ENCODE measurements at regions of chr18 and their contacts with region 1.

Region 1: GRCh38 chr18:59395226-59396110 is 36.4 kb upstream of the LMAN1 start:
- ATAC-seq: no peak
- H3K4me3 ChIP-seq: no peak overlapping the region
- H3K27ac ChIP-seq: no peak overlapping the region
- H3K4me1 ChIP-seq: peaks cover 0 to 3% of the 10 kb centered on the region in 2 donors

Region 2: DNA sequence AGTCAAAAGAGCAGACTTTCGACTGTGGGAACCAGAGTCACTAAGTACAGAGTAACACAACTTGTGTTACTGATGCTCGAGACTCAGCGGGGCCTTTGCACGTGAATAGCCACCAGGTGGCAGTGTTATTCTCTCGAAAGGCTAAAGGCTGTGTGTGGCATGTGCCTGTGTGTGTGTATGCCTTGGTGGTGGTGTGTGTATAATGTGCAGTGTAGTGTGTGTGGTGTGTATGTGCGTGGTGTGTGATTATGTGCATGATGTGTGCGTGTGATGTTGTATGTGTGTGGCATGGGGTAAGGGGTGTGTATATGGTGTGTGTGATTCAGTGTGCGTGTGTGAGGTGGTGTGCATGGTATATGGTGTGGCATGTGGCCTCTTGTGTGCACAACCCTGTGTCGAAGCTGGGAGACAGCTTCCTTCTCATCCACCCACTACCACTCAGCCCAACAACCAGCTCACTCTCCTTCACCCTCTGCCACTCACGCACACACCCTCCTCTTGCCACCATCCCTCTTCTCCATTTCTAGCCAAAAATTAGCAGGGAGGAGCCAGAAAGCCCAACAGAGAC is 613.8 kb before region 1 on chr18:
- in situ Hi-C with region 1: loop called in 1 of 9 experiments (anchors 25 kb)
- ATAC-seq: peak; percentile 78 to 90 (median 89)
- H3K4me3 ChIP-seq: no peak overlapping the region
- H3K27ac ChIP-seq: no peak overlapping the region
- H3K4me1 ChIP-seq: peaks cover 15% of the 10 kb centered on the region in 2 donors

Region 3: DNA sequence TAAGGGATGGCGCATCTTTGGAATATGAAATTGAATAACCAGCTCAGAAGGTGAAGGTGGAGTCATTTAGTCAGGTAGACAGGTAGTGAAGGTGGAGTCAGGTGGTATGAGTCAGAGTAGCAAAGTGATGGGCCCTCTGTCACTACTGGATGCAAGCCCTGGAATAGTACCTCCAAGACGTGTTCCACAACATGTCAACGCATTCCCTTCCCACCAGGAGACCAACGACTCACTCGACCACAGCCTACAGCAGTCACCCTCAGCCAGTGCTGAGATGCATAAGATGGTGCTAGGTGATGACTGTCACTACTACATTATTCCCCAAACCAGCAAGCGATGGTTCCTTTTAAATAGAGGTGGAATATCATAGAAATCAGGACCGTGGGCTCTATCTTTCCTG is 83.8 kb before region 1 on chr18:
- in situ Hi-C with region 1: loop called in 1 of 9 experiments (anchors 10 kb)
- ATAC-seq: no peak
- H3K4me3 ChIP-seq: no peak overlapping the region
- H3K27ac ChIP-seq: no peak overlapping the region
- H3K4me1 ChIP-seq: no peaks in the 10 kb centered on the region

Region 4: DNA sequence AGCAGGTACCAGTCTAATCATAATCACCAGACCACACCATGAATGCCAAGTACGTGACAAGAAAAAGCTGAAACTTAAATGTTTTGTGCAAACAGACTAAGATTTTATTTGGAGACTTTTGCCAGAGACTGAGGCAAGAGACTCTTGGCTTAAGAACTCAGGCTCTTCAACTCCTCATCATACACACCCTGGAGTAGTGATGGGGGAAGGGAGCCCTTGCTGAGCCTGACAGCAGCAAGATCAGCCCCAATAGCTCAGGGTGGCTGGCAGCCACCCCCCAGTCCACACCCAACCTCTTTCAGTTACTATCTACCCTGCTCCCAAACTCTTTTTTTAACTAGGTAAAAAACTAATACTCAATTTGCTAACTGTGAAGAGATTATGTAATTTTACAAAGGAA is 186.9 kb after region 1 on chr18:
- in situ Hi-C with region 1: no loop called
- ATAC-seq: no peak
- H3K4me3 ChIP-seq: no peak overlapping the region
- H3K27ac ChIP-seq: no peak overlapping the region
- H3K4me1 ChIP-seq: peaks cover 1 to 38% of the 10 kb centered on the region in 2 donors

Region 5: DNA sequence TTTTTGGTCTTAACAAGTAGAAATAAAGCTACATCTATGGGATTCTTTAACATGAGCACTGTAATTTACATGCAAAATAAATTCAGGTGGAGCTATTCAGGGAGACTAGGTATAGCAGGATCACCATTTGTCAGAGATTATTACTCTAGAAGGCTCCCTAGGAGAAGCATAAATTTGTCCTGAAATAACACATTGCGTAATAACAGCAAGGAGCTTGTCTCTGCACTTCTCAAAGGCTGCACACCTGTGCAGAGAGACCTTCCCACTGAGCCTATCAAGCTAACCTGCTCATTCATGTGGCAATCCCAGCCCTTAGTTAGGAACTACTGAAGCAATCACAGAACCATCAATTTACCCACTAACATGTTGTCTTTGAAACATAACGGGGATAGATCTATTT is 1414.5 kb after region 1 on chr18:
- in situ Hi-C with region 1: no loop called
- ATAC-seq: no peak
- H3K4me3 ChIP-seq: no peak overlapping the region
- H3K27ac ChIP-seq: no peak overlapping the region
- H3K4me1 ChIP-seq: peaks cover under 1 to 19% of the 10 kb centered on the region in 2 donors

Measured in motor neuron (in vitro differentiated cells).